ENCODE measurements at regions of chr16 and their contacts with region 1.

Region 1: DNA sequence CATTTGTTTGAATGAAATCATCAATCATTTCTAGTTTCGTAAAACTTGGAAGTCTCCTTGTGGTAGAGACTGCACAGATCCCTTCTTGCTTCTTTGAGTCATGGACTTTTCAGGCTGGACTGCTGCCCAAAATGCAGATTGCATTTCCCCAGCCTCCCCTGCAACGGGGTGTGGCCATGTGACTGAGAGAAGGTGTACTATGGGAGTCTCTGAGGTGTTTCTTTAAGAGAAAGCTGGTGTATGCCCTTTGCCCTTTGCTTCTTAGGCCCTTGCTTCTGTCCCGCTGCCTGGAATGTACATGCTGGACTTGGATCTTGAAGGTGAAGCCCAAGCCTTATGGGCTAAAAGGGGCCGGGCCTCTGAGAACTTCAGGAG is 51.6 kb downstream of the FTO start:
- DNase-seq: no peak

Region 2: GRCh38 chr16:53743149-53743566 is 12.4 kb before region 1 on chr16:
- CTCF ChIA-PET with region 1: interaction called, 10 read pairs
- POLR2A ChIA-PET with region 1: no interaction called
- DNase-seq: peak; percentile 32

Region 3: GRCh38 chr16:53805113-53805512 is 49.6 kb after region 1 on chr16:
- CTCF ChIA-PET with region 1: no interaction called
- POLR2A ChIA-PET with region 1: no interaction called
- DNase-seq: no peak